Caco-2 (cell line): ENCODE measurements at regions of chr18 and their contacts with region 1.

Region 1: GRCh38 chr18:49728542-49728941 is 84.8 kb downstream of the ACAA2 start:
- DNase-seq: peak; percentile 35 to 46
- H3K4me3 ChIP-seq: no peak overlapping the region
- H3K4me3 Mint-ChIP-seq: no peak overlapping the region
- H3K27ac Mint-ChIP-seq: peak overlapping the region; percentile 97
- H3K4me1 ChIP-seq: peaks cover 82% of the 10 kb centered on the region
- H3K4me1 Mint-ChIP-seq: peaks cover 20% of the 10 kb centered on the region
- H3K27me3 ChIP-seq: no peaks in the 10 kb centered on the region
- H3K27me3 Mint-ChIP-seq: no peaks in the 10 kb centered on the region
- CTCF ChIP-seq: peak; percentile 20 to 22

Region 2: GRCh38 chr18:49561289-49562193 is 167.0 kb before region 1 on chr18 and contains the start of gene LIPG:
- CTCF ChIA-PET with region 1: interaction called, 3 read pairs
- POLR2A ChIA-PET with region 1: interaction called, 3 read pairs
- intact Hi-C with region 1: loop called (anchors 2 kb)
- DNase-seq: peak; percentile 82 to 84
- H3K4me3 ChIP-seq: peak within 1 kb of the TSS; percentile 56
- H3K4me3 Mint-ChIP-seq: peak within 1 kb of the TSS; percentile 98
- H3K27ac Mint-ChIP-seq: peak within 1 kb of the TSS; percentile 92
- H3K4me1 ChIP-seq: no peaks in the 10 kb centered on the region
- H3K4me1 Mint-ChIP-seq: no peaks in the 10 kb centered on the region
- H3K27me3 ChIP-seq: no peaks in the 10 kb centered on the region
- H3K27me3 Mint-ChIP-seq: no peaks in the 10 kb centered on the region
- CTCF ChIP-seq: no peak
- total RNA-seq, gene LIPG: 86.7 and 87.5 TPM in 2 replicates

Region 3: DNA sequence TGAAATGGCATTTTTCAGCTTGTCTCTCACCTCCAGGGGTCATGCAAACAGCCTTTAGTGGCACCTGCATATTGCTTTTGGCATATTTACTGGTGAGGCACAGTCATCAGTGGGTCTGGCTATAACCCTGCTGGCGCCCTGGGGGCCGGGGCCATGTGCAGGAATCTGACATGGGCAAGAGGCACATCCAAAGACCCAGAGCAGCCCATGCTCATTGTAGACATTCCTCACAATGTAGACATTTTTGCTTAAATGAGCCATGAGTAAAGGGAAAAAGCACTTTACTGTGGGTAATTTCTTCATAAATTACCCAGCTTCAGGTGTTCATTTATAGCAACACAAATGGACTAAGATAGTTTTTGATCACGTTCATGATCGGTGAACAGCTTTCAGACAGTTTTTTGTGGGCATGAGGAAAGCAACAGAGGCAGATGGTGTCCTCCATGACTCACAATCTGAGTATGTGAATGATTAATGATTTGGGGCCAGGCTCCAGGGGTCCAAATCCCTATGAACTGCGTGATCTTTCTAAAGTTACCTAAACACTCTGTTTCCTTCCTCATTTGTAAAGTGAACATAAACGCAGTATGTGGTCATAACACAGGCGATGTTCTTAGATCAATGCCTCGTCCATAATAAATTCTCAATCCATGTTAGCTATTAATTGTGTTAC is 80.9 kb before region 1 on chr18:
- CTCF ChIA-PET with region 1: interaction called, 4 read pairs
- POLR2A ChIA-PET with region 1: no interaction called
- intact Hi-C with region 1: loop called (anchors 1 kb)
- DNase-seq: no peak
- H3K4me3 ChIP-seq: no peak overlapping the region
- H3K4me3 Mint-ChIP-seq: no peak overlapping the region
- H3K27ac Mint-ChIP-seq: no peak overlapping the region
- H3K4me1 ChIP-seq: peaks cover 11% of the 10 kb centered on the region; the same call in 1 of the 2 replicates
- H3K4me1 Mint-ChIP-seq: peaks cover 6% of the 10 kb centered on the region
- H3K27me3 ChIP-seq: no peaks in the 10 kb centered on the region
- H3K27me3 Mint-ChIP-seq: no peaks in the 10 kb centered on the region
- CTCF ChIP-seq: no peak

Region 4: GRCh38 chr18:49690307-49690706 is 38.2 kb before region 1 on chr18:
- CTCF ChIA-PET with region 1: no interaction called
- POLR2A ChIA-PET with region 1: no interaction called
- intact Hi-C with region 1: loop called (anchors 5 kb)
- DNase-seq: no peak
- H3K4me3 ChIP-seq: no peak overlapping the region
- H3K4me3 Mint-ChIP-seq: no peak overlapping the region
- H3K27ac Mint-ChIP-seq: no peak overlapping the region
- H3K4me1 ChIP-seq: peaks cover 19% of the 10 kb centered on the region
- H3K4me1 Mint-ChIP-seq: peaks cover 20% of the 10 kb centered on the region
- H3K27me3 ChIP-seq: no peaks in the 10 kb centered on the region
- H3K27me3 Mint-ChIP-seq: no peaks in the 10 kb centered on the region
- CTCF ChIP-seq: no peak

Region 5: GRCh38 chr18:49768051-49768391 is 39.5 kb after region 1 on chr18:
- CTCF ChIA-PET with region 1: interaction called, 3 read pairs
- POLR2A ChIA-PET with region 1: no interaction called
- intact Hi-C with region 1: loop called (anchors 2 kb)
- DNase-seq: peak; percentile 61 to 68
- H3K4me3 ChIP-seq: no peak overlapping the region
- H3K4me3 Mint-ChIP-seq: no peak overlapping the region
- H3K27ac Mint-ChIP-seq: no peak overlapping the region
- H3K4me1 ChIP-seq: no peaks in the 10 kb centered on the region
- H3K4me1 Mint-ChIP-seq: peaks cover 9% of the 10 kb centered on the region
- H3K27me3 ChIP-seq: no peaks in the 10 kb centered on the region
- H3K27me3 Mint-ChIP-seq: no peaks in the 10 kb centered on the region
- CTCF ChIP-seq: peak; percentile 30 to 70

Region 6: DNA sequence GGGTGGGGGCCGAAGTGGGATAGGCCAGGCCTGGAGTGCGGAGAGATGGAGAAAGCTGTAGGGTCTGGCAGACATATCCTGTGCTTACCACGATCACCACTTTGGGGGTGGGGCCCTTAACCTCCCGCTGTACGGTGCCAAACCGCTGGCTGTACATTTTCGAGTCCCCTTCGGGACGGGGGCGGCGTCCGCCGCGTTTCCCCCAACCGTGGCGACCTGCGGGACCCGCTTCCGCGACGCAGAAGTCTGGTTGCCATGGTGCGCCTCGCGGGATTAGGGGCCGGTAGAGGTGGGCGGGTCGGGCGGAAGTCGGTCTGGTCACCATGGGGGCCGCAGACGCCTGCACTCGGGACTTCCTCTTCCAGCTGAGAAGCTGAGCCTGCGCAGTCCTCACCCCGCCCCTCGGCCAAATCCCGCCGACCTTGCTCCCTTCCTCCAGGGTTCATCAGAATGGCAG is 537.7 kb after region 1 on chr18 and contains the start of gene CFAP53:
- CTCF ChIA-PET with region 1: no interaction called
- POLR2A ChIA-PET with region 1: no interaction called
- intact Hi-C with region 1: no loop called
- DNase-seq: peak; percentile 78 to 79
- H3K4me3 ChIP-seq: peak within 1 kb of the TSS; percentile 44
- H3K4me3 Mint-ChIP-seq: peak within 1 kb of the TSS; percentile 77
- H3K27ac Mint-ChIP-seq: peak within 1 kb of the TSS; percentile 74
- H3K4me1 ChIP-seq: no peaks in the 10 kb centered on the region
- H3K4me1 Mint-ChIP-seq: no peaks in the 10 kb centered on the region
- H3K27me3 ChIP-seq: no peaks in the 10 kb centered on the region
- H3K27me3 Mint-ChIP-seq: peaks cover 2% of the 10 kb centered on the region
- CTCF ChIP-seq: no peak
- total RNA-seq, gene CFAP53: 0.23 TPM in 1 of 2 replicates, not detected in the other

Region 7: DNA sequence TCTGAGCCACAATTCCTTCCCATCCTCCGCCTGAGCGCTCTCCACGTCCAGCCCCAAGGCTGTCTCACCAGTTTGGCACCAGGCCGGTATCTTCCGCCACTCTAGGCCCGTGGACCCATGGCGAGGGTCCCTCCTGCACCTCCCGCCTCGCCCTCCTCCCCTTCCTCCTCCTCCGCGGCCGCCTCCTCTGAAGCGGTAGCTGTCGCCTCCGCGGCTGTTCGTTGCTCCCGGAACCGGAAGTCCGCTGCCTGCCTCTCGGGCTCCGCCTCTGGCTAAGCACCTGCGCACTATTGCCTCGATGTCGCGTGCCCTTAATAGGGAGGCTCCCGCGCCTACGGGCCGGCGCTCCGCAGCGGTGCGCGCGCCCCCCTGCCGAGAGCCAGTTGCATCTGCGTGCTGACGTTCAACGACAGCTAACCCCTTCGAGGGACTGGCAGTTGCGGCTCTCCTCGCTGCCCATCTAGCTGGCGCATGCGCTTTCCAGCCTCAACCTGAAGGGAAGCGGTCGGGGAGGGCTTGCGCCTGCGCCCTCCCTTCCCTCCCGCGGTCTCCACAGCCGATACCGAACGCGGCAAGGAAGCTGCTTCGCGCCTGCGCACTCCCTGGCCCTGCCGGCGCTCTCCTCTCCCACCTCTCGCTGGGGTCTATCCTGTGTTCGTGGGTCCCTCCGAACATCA is 552.9 kb after region 1 on chr18 and contains the start of gene MBD1:
- CTCF ChIA-PET with region 1: no interaction called
- POLR2A ChIA-PET with region 1: no interaction called
- intact Hi-C with region 1: no loop called
- DNase-seq: peak; percentile 88 to 91
- H3K4me3 ChIP-seq: peak within 1 kb of the TSS; percentile 56
- H3K4me3 Mint-ChIP-seq: peak within 1 kb of the TSS; percentile 86
- H3K27ac Mint-ChIP-seq: peak within 1 kb of the TSS; percentile 94
- H3K4me1 ChIP-seq: no peaks in the 10 kb centered on the region
- H3K4me1 Mint-ChIP-seq: peaks cover 12% of the 10 kb centered on the region
- H3K27me3 ChIP-seq: no peaks in the 10 kb centered on the region
- H3K27me3 Mint-ChIP-seq: no peaks in the 10 kb centered on the region
- CTCF ChIP-seq: no peak
- total RNA-seq, gene MBD1: 31.1 and 34.7 TPM in 2 replicates